Activated T-helper 2 cell treated with anti-CD3 and anti-CD28 coated beads, Interferon-gamma antibody, Interleukin-2, Interleukin-4, amounts not matched to agents 10 μg/mL and 5 μg/mL and 100 μg/mL, durations not matched to agents 14 hours and 24 hours and 36 hours (primary cell): ENCODE measurements at regions of chr7 and their contacts with region 1.

Region 1: GRCh38 chr7:103317016-103317415 is 19.8 kb downstream of the PMPCB start:
- DNase-seq: no peak
- H3K4me3 Mint-ChIP-seq: no peak overlapping the region
- H3K27ac Mint-ChIP-seq: no peak overlapping the region
- H3K4me1 Mint-ChIP-seq: peaks cover 7% of the 10 kb centered on the region
- H3K27me3 Mint-ChIP-seq: no peaks in the 10 kb centered on the region

Region 2: DNA sequence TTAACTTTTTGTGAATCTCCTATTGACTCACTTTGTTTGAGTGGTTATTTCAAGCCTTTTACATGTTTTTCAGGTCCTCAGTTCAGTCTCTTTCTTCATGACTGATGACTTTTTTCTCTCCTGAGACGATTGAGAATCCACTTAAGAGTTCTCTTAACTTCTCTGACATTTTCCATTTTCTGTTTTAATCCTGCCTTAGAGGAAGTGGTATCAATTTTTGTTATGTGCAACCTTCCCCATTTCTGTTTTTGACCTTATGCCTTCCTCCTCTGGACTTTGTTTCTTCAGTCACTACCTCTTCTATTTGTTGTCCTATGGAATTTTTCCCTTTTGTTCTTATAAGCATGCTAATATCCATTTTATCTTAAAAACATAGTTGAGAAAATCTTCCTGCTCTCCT is 32.8 kb after region 1 on chr7:
- intact Hi-C with region 1: loop called (anchors 5 kb)
- DNase-seq: no peak
- H3K4me3 Mint-ChIP-seq: peak overlapping the region; percentile 98
- H3K27ac Mint-ChIP-seq: peak overlapping the region; percentile 27
- H3K4me1 Mint-ChIP-seq: peaks cover 38% of the 10 kb centered on the region
- H3K27me3 Mint-ChIP-seq: no peaks in the 10 kb centered on the region